ENCODE measurements at regions of chr1 and their contacts with region 1.

Region 1: DNA sequence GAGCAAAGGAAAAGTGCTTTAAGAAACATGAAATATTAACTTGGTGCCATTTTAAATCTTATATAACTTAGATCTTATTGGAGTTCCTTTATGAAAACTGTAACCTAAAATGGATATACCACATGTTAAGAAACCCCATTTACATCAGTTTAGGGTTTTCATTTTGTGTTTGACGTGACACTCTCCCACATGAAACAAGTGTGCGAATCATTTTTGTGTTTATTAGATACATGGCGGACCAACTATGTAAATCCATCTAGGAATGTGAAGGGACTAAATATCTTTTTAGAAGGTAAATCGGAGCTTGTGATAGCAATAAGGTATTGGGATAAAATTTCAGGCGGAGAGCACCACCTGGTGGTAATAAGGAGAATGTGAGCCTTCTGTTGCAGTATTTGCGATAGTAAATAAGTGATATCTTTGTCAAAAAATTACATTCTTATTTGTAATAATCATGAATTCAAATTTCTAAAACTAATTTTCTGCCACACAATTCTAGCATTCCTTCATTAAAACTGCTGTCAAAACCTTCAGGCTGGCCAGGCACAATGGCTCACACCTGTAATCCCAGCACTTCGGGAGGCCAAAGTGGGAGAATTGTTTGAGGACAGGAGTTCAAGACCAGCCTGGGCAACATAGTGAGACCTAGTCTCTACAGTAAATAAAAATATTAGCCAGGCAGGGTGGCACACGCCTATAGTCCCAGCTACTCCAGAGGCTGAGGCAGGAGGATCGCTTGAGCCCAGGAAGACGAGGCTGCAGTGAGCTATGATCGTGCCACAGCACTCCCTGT is 31.3 kb downstream of the SMAP2 start:
- DNase-seq: peak; percentile 32 to 54
- H3K4me3 ChIP-seq: no peak overlapping the region
- H3K27ac ChIP-seq: no peak overlapping the region
- H3K4me1 ChIP-seq: no peaks in the 10 kb centered on the region; the same call in 1 of the 2 replicates
- H3K27me3 ChIP-seq: no peaks in the 10 kb centered on the region
- CTCF ChIP-seq: peak; percentile 91

Region 2: DNA sequence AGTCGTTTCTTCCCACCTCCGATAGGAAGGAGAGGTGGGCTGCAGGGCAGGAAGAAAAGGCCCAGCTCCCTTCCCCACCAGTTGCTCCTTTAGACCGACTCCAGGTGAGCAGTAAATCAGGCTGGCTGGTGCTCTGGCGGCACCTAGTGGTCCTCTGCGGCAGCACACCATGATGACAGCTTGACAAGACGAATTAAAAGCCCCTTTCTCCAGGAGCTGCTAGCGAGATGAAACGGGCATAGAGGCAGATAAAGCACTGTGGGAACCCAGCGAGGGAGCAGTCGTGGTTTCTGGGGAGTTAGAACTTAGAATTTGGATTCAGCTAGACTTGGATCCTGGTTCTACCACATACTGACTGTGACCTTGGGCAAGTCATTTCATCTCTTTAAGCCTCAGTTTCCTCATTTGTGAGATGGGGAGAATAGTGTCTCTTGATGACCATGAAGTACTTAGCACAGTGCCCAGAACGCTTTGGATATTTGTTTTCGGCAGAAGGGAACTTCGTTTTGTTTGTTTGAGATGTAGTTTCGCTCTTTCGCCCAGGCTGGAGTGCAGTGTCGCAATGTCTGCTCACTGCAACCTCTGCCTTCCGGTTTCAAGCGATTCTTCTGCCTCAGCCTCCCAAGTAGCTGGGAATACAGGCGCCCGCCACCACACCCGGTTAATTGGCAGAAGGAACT is 66.0 kb before region 1 on chr1:
- CTCF ChIA-PET with region 1: interaction called, 7 read pairs
- POLR2A ChIA-PET with region 1: no interaction called
- intact Hi-C with region 1: loop called (anchors 2 kb)
- DNase-seq: peak; percentile 71 to 93
- H3K4me3 ChIP-seq: no peak overlapping the region; the same call in 1 of the 2 replicates
- H3K27ac ChIP-seq: no peak overlapping the region
- H3K4me1 ChIP-seq: peaks cover 10% of the 10 kb centered on the region
- H3K27me3 ChIP-seq: no peaks in the 10 kb centered on the region
- CTCF ChIP-seq: peak; percentile 98

Measured in PC-9 (cell line).